WTC11 (cell line): ENCODE measurements at regions of chr10 and their contacts with region 1.

Region 1: GRCh38 chr10:36171953-36172940 is 530.2 kb upstream of the FZD8 start:
- DNase-seq: no peak
- ATAC-seq: no peak
- H3K4me3 Mint-ChIP-seq: no peak overlapping the region
- H3K27ac Mint-ChIP-seq: no peak overlapping the region
- H3K4me1 Mint-ChIP-seq: peaks cover 46% of the 10 kb centered on the region
- H3K27me3 Mint-ChIP-seq: no peaks in the 10 kb centered on the region
- CTCF ChIP-seq: no peak

Region 2: GRCh38 chr10:36194276-36194675 is 22.0 kb after region 1 on chr10:
- CTCF ChIA-PET with region 1: no interaction called
- POLR2A ChIA-PET with region 1: no interaction called
- DNase-seq: no peak
- ATAC-seq: no peak
- H3K4me3 Mint-ChIP-seq: no peak overlapping the region
- H3K27ac Mint-ChIP-seq: no peak overlapping the region
- H3K4me1 Mint-ChIP-seq: peaks cover 28% of the 10 kb centered on the region
- H3K27me3 Mint-ChIP-seq: peaks cover 9% of the 10 kb centered on the region
- CTCF ChIP-seq: no peak

Region 3: DNA sequence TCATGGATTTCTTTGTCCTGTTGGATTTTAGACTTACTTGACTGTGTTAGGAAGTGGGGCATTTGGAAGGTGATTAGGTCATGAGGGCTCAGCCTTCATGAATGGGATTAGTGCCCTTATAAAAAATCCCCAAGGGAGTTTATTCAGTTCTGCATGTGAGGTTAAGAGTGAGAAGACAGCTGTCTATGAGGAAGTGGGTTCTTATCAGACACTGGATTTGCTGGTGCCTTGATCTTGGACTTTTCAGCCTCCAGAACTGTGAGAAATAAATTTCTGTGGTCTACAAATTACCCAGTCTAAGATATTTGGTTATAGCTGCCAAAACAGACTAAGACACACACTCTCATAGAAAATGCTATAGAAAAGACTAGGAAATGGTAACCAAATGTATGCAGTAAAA is 194.6 kb after region 1 on chr10:
- CTCF ChIA-PET with region 1: no interaction called
- POLR2A ChIA-PET with region 1: interaction called, 11 read pairs
- DNase-seq: no peak
- ATAC-seq: no peak
- H3K4me3 Mint-ChIP-seq: no peak overlapping the region
- H3K27ac Mint-ChIP-seq: no peak overlapping the region
- H3K4me1 Mint-ChIP-seq: no peaks in the 10 kb centered on the region
- H3K27me3 Mint-ChIP-seq: no peaks in the 10 kb centered on the region; the same call in 1 of the 2 replicates
- CTCF ChIP-seq: no peak